Activated CD4-positive, alpha-beta memory T cell treated with anti-CD3 and anti-CD28 coated beads for 36 hours (primary cell): ENCODE measurements at regions of chr2 and their contacts with region 1.

Region 1: GRCh38 chr2:130873700-130874346 is 37.1 kb downstream of the ARHGEF4 start:
- DNase-seq: peak; percentile 83
- H3K4me3 Mint-ChIP-seq: no peak overlapping the region
- H3K27ac Mint-ChIP-seq: no peak overlapping the region
- H3K4me1 Mint-ChIP-seq: no peaks in the 10 kb centered on the region
- H3K27me3 Mint-ChIP-seq: peaks cover 6% of the 10 kb centered on the region

Region 2: DNA sequence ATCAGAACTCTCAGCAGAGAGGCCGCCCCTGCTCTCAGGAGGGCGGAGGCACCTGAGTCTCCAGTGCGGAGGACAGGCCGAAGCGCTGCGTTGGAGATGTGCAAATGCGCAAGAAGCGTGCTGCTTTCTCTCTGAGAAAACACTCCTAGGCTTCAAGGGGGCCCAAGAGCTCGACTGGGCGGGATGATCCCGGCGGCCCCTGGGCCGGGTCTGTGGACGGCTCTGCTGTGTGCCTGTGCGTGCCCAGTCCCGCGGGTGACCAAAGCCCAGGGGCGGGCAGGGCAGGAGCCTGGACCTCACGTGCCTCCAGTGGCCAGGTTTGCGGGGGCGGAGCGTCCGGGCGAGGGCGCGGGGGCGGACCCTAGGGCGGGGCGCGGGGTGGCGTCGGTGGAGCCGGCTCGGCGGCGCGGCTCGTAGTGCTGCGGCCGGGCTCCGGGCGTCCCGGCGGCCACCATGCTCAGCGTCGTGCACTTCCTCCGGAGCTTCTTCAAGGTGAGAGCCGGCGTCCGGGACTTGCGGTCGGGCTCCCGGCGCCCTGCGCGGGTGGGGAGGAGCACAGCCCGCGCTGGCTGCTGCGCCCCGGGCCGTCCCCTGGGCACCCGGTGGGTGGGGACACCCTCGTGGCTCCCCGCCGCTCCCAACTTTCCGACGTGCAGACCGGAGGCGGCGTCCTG is 37.2 kb before region 1 on chr2 and contains the start of gene ARHGEF4:
- CTCF ChIA-PET with region 1: interaction called, 6 read pairs
- POLR2A ChIA-PET with region 1: no interaction called
- intact Hi-C with region 1: loop called (anchors 1 kb)
- DNase-seq: peak; percentile 42
- H3K4me3 Mint-ChIP-seq: peak within 1 kb of the TSS; percentile 41
- H3K27ac Mint-ChIP-seq: no peak within 1 kb of the TSS
- H3K4me1 Mint-ChIP-seq: no peaks in the 10 kb centered on the region
- H3K27me3 Mint-ChIP-seq: peaks cover 40% of the 10 kb centered on the region
- total RNA-seq, gene ARHGEF4: 0.52 to 0.58 TPM

Region 3: DNA sequence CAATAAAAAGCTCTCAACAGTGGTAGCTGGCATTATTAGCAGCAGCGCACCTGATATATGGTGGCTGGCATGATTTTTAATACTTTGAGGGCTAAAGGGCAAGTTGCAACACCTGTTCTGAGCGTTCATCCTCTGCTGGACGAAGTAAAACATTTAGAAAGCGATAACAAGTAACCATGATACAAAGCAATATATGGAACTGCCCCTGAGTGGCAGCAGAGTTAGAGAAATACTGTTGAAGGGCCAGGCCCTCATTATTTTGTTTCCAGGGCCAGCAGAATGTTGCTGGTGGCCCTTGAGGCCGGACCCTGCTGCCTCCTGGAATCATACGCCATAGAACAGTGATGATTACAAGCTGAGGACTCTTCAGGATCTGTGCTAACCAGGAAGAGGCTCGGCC is 10.7 kb after region 1 on chr2:
- CTCF ChIA-PET with region 1: interaction called, 10 read pairs
- POLR2A ChIA-PET with region 1: no interaction called
- intact Hi-C with region 1: no loop called
- DNase-seq: no peak
- H3K4me3 Mint-ChIP-seq: no peak overlapping the region
- H3K27ac Mint-ChIP-seq: no peak overlapping the region
- H3K4me1 Mint-ChIP-seq: no peaks in the 10 kb centered on the region
- H3K27me3 Mint-ChIP-seq: no peaks in the 10 kb centered on the region

Region 4: DNA sequence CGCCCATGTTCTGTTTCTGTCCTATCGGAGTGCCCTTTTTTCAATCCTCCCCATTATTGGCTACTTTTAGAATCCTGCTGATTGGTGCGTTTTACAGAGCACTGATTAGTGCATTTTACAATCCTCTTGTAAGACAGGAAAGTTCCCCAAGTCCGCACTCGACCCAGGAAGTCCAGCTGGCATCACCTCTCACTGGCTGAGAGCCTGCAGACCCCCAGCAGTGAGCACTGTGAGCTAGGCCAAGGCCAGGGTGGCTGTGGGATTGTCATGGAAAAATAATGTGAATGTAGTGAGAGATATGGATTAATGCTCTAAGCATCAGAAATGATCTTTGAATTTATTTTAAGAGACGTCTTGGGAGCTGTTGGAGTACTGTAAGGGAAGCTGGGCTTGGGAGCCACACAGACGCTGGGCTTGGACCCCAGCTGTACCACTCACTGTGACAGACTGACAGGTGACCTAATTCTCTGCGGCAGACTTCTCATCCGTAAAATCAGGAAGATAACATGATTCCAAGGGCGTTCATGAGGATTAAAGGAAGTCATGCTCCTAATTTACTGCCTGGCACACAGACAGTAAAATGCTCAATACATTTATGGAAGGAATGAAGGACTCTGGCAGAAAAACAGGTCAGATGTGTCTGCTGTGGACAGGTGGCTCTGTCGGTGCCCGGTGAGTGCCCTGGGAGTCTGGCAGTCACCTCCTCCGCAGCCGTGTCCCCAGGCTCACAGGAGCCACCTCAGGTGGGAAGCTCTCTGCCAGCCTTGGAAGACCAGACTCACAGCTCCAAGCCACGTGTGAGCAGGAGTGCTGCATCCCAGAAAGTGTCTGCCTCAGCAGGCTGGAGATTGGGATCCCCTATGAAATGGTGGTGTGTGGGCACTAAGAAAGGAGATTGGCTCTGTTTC is 114.0 kb after region 1 on chr2:
- CTCF ChIA-PET with region 1: no interaction called
- POLR2A ChIA-PET with region 1: no interaction called
- intact Hi-C with region 1: no loop called
- DNase-seq: no peak
- H3K4me3 Mint-ChIP-seq: no peak overlapping the region
- H3K27ac Mint-ChIP-seq: no peak overlapping the region
- H3K4me1 Mint-ChIP-seq: no peaks in the 10 kb centered on the region
- H3K27me3 Mint-ChIP-seq: no peaks in the 10 kb centered on the region

Region 5: GRCh38 chr2:131040661-131041401 is 167.0 kb after region 1 on chr2:
- CTCF ChIA-PET with region 1: no interaction called
- POLR2A ChIA-PET with region 1: no interaction called
- intact Hi-C with region 1: no loop called
- DNase-seq: no peak
- H3K4me3 Mint-ChIP-seq: no peak overlapping the region
- H3K27ac Mint-ChIP-seq: no peak overlapping the region
- H3K4me1 Mint-ChIP-seq: peaks cover 28% of the 10 kb centered on the region
- H3K27me3 Mint-ChIP-seq: no peaks in the 10 kb centered on the region